ENCODE measurements at regions of chr22 and their contacts with region 1.

Region 1: DNA sequence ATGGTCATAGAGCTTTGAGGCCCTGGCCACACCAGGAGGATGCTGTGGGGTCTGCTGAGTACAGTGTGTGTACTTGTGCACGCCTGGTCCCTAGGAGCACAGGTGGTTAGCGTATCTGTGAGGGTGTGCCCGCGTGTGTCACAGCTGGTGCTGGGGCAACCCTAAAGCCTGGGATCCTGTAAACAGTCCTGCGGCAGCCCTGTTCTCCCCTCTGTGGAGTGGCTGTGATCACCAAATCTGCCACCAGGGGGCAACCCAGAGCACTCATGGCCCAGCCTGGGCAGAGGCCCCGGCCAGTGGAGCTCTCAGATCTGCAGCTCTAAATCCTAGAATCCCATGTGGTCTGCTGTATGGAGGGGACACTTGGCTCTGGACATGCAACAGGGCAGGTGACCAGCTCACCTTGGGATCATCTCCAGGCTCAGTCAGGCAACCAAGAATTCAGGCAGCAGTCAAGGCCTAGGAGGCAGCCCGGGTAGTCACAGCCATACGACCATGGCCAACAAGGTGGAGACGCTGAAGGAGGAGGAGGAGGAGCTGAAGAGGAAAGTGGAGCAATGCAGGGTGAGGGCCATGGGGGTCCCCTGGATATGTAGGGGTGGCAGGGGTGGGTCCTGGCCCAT is 3.9 kb downstream of the SH3BP1 start:
- DNase-seq: peak; percentile 88
- H3K4me3 Mint-ChIP-seq: peak overlapping the region; percentile 50
- H3K27ac Mint-ChIP-seq: peak overlapping the region; percentile 66
- H3K4me1 Mint-ChIP-seq: peaks cover 40% of the 10 kb centered on the region
- H3K27me3 Mint-ChIP-seq: no peaks in the 10 kb centered on the region

Region 2: GRCh38 chr22:37581504-37581903 is 61.8 kb before region 1 on chr22:
- CTCF ChIA-PET with region 1: no interaction called
- POLR2A ChIA-PET with region 1: no interaction called
- DNase-seq: no peak
- H3K4me3 Mint-ChIP-seq: no peak overlapping the region
- H3K27ac Mint-ChIP-seq: no peak overlapping the region
- H3K4me1 Mint-ChIP-seq: peaks cover 7% of the 10 kb centered on the region
- H3K27me3 Mint-ChIP-seq: peaks cover 17% of the 10 kb centered on the region

Region 3: GRCh38 chr22:37625737-37626521 is 17.4 kb before region 1 on chr22:
- CTCF ChIA-PET with region 1: interaction called, 66 read pairs
- POLR2A ChIA-PET with region 1: interaction called, 110 read pairs
- DNase-seq: no peak
- H3K4me3 Mint-ChIP-seq: no peak overlapping the region
- H3K27ac Mint-ChIP-seq: no peak overlapping the region
- H3K4me1 Mint-ChIP-seq: peaks cover 47% of the 10 kb centered on the region
- H3K27me3 Mint-ChIP-seq: no peaks in the 10 kb centered on the region

Region 4: GRCh38 chr22:37658133-37659065 is 15.1 kb after region 1 on chr22 and contains the start of gene PDXP:
- CTCF ChIA-PET with region 1: interaction called, 151 read pairs
- POLR2A ChIA-PET with region 1: interaction called, 126 read pairs
- DNase-seq: peak; percentile 98
- H3K4me3 Mint-ChIP-seq: peak within 1 kb of the TSS; percentile 84
- H3K27ac Mint-ChIP-seq: peak within 1 kb of the TSS; percentile 80
- H3K4me1 Mint-ChIP-seq: peaks cover 42% of the 10 kb centered on the region
- H3K27me3 Mint-ChIP-seq: no peaks in the 10 kb centered on the region
- total RNA-seq, gene PDXP: 19.1 to 21.6 TPM

Region 5: DNA sequence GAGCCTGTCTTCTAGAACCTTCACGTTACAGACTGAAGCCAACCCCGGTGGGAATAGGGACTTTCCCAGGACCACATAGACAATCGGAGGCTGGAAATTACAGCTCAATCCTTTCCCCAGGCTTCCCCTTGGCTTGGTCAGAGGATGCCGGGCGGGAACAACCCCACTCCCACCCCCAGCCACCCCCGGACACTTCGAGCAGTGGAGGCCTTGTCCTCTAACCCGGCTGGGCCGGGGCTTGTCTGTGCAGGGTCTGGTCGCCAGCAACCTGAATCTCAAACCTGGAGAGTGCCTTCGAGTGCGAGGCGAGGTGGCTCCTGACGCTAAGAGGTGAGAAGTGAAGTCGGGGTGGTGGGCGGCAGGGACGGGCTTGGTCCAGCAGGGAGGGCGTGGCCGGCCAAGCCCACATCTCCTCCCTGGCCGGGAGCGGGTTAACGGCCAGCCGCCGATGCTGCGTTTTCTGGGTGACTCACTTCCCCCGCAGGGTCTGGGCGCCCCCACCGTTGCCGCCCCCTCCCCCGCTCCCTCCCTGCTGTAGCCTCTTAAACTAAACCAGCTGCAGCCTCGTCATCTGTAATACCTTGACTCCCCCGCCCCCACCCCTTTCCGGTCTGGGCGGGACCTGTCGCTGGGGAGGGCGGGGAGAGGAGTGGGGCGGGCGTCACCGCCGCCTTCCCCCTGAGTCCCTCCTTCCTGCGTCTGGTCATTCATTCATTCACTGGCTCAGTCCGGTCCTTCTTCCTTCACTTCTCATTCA is 33.6 kb after region 1 on chr22:
- CTCF ChIA-PET with region 1: interaction called, 301 read pairs
- POLR2A ChIA-PET with region 1: interaction called, 118 read pairs
- DNase-seq: peak; percentile 96
- H3K4me3 Mint-ChIP-seq: peak overlapping the region; percentile 88
- H3K27ac Mint-ChIP-seq: peak overlapping the region; percentile 99
- H3K4me1 Mint-ChIP-seq: peaks cover 62% of the 10 kb centered on the region
- H3K27me3 Mint-ChIP-seq: no peaks in the 10 kb centered on the region

Region 6: DNA sequence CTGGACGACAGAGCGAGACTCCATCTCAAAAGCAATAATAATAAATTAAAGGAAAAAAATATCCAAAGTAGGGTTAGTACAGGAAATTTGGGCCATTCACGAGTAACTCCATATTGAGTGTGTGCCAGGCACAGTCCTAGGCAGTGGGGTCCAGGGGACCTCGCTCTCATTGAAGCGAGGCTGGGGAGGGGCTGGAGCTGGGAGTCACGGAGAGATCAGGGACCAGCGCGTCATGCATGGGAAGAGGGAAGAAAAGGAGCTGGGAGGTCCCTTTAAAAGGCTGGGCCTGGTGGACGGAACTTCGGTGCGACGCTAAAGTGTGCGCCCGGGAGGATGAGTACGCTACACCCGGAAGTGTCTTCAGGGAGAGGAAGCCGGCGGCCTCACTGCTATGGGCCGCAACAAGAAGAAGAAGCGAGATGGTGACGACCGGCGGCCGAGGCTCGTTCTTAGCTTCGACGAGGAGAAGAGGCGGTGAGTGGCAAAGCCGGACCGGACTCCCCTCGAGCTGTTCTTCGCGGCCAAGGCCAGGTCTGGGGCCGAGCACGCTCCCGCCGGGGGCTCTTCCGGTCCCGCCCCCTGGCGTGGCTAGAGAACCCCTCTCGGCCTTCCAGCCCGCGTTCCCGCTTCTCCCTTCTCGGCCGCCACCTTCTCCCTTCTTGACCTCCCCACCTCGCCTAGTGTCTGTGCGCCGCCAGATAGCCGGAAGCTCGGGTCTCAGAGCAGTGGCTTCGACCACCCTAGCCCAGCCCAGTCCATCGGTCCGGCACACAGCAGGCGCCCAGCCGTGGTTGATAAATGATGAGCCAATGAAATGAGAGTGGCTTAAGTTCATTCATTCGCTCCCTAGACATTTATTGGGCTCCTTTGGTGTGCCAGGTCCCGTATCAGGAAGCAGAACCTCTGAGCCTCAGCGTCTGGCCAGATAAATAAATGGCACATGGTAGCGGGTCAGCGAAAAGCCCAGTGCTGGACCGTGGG is 43.0 kb after region 1 on chr22 and contains the start of gene NOL12:
- CTCF ChIA-PET with region 1: interaction called, 301 read pairs
- POLR2A ChIA-PET with region 1: interaction called, 25 read pairs
- DNase-seq: peak; percentile 81
- H3K4me3 Mint-ChIP-seq: peak within 1 kb of the TSS; percentile 93
- H3K27ac Mint-ChIP-seq: peak within 1 kb of the TSS; percentile 88
- H3K4me1 Mint-ChIP-seq: peaks cover 28% of the 10 kb centered on the region
- H3K27me3 Mint-ChIP-seq: no peaks in the 10 kb centered on the region
- total RNA-seq, gene NOL12: 36.6 to 36.9 TPM

Region 7: DNA sequence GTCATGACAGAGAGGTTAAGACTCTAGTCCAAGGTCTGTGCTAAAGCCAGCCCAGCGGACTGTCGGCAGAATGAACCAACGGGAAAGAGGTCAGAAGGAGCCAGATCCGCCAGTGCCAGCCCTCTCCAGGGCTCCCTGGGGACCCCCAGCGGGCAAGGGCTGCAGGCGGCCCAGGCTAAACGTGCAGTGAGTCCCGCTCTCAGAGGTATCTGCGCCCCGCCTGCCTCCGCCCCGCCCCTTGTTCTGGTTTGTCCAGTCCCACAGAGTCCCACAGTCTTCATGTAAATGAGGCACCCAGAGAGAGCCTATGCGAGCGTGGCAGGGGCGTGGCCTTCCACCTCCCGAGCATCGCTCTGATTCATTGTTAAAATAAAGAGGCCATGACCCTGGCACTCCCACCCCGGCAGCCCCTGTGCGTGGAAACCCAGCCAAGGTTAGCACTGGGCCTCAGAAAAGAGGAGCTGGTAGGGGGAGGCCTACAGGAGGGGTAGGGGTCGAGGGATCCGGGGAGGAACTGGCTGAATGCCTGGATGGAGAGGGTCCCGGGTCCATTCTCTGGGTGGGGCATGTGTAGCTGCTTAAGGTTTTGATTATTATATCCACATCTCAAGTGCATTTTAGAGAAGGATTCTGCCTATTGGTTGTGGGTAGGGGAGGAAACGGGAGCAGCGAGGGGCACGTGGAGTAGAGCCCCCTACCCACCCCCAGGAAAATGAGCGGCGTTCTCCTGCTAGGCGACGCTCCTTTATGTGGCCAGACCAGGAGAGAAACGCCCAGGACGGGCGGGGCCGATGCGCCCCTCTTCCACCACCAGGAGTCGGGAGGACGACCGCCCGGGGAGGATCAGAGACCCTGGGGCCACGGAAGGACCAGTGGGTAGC is 53.6 kb after region 1 on chr22 and contains the start of gene TRIOBP:
- CTCF ChIA-PET with region 1: interaction called, 10 read pairs
- POLR2A ChIA-PET with region 1: interaction called, 3 read pairs
- DNase-seq: peak; percentile 87
- H3K4me3 Mint-ChIP-seq: peak within 1 kb of the TSS; percentile 50
- H3K27ac Mint-ChIP-seq: no peak within 1 kb of the TSS
- H3K4me1 Mint-ChIP-seq: peaks cover 11% of the 10 kb centered on the region
- H3K27me3 Mint-ChIP-seq: no peaks in the 10 kb centered on the region
- total RNA-seq, gene TRIOBP: 40.9 to 42.7 TPM